Activated CD4-positive, alpha-beta T cell treated with anti-CD3 and anti-CD28 coated beads for 36 hours (primary cell): ENCODE measurements at regions of chr4 and their contacts with region 1.

Region 1: GRCh38 chr4:154807042-154807630 is 26.1 kb downstream of the RBM46 start:
- DNase-seq: no peak
- ATAC-seq: no peak
- H3K4me3 Mint-ChIP-seq: no peak overlapping the region
- H3K27ac Mint-ChIP-seq: no peak overlapping the region
- H3K4me1 Mint-ChIP-seq: no peaks in the 10 kb centered on the region
- H3K27me3 Mint-ChIP-seq: peaks cover 3% of the 10 kb centered on the region

Region 2: GRCh38 chr4:154838694-154839093 is 31.6 kb after region 1 on chr4:
- CTCF ChIA-PET with region 1: no interaction called
- POLR2A ChIA-PET with region 1: no interaction called
- intact Hi-C with region 1: no loop called
- DNase-seq: no peak
- ATAC-seq: no peak
- H3K4me3 Mint-ChIP-seq: no peak overlapping the region
- H3K27ac Mint-ChIP-seq: no peak overlapping the region
- H3K4me1 Mint-ChIP-seq: no peaks in the 10 kb centered on the region
- H3K27me3 Mint-ChIP-seq: no peaks in the 10 kb centered on the region

Region 3: DNA sequence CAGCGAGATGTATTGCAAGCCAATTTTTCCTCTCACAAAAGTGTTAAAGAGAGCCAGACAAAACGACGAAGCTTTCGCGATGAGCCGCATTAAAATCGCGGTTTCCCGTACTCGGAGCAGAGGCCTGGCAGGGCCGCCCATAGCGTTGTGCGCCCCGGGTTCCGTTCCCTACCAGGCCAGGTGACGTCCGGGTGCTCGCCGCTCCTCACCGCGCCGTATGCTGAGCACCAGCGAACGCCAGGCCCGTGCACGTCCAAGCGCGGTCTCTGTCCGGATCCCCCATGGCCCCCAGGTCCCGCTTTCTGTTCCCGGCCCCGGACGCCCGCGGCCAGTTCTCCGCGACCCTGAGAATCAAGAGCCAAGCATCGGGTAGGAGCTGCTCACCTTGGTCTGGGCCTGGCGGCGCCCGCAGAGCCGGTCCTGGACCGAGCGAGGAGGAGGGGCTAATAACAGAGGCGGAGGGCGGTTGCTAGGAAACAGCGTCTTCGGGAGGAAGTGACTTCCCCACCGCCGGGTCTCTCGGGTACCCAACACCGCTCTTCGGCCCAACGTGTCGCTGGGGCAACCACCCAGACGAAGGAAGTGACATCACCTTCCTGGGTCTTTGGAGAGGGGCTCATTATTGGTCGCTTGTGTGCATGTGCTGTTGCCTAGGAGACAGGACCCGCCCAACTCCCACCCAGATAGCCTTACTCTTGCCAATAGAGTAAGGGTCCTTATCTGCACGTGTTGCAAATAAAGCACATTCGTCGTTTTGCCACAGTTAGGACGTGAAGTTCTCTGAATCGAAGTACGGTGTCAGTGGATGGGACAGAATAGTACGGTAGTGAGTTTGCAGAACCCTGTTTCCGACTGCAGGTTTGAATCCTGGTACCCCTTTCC is 569.5 kb after region 1 on chr4 and contains the start of gene MAP9:
- CTCF ChIA-PET with region 1: interaction called, 4 read pairs
- POLR2A ChIA-PET with region 1: no interaction called
- intact Hi-C with region 1: loop called (anchors 1 to 5 kb)
- DNase-seq: peak; percentile 94
- ATAC-seq: peak; percentile 96
- H3K4me3 Mint-ChIP-seq: peak within 1 kb of the TSS; percentile 83
- H3K27ac Mint-ChIP-seq: peak within 1 kb of the TSS; percentile 79
- H3K4me1 Mint-ChIP-seq: peaks cover 16% of the 10 kb centered on the region
- H3K27me3 Mint-ChIP-seq: no peaks in the 10 kb centered on the region
- total RNA-seq, gene MAP9: 8.0 to 8.1 TPM